ENCODE measurements at regions of chr12 and their contacts with region 1.

Region 1: GRCh38 chr12:57852620-57853500 is 6.3 kb upstream of the CTDSP2 start:
- DNase-seq: no peak
- H3K4me3 ChIP-seq: no peak overlapping the region
- H3K27ac ChIP-seq: no peak overlapping the region
- H3K4me1 ChIP-seq: no peaks in the 10 kb centered on the region
- H3K27me3 ChIP-seq: no peaks in the 10 kb centered on the region
- CTCF ChIP-seq: no peak

Region 2: GRCh38 chr12:57765042-57765697 is 87.7 kb before region 1 on chr12:
- CTCF ChIA-PET with region 1: no interaction called
- dilution Hi-C with region 1: no loop called
- in situ Hi-C with region 1: no loop called
- intact Hi-C with region 1: no loop called
- DNase-seq: peak; percentile 73
- H3K4me3 ChIP-seq: peak overlapping the region; percentile 45 to 68 (median 58)
- H3K27ac ChIP-seq: peak overlapping the region; percentile 44
- H3K4me1 ChIP-seq: peaks cover 37% of the 10 kb centered on the region
- H3K27me3 ChIP-seq: no peaks in the 10 kb centered on the region
- CTCF ChIP-seq: peak; percentile 18 to 49

Region 3: GRCh38 chr12:57815177-57816000 is 37.5 kb before region 1 on chr12:
- CTCF ChIA-PET with region 1: no interaction called
- dilution Hi-C with region 1: loop called (anchors 5 kb)
- in situ Hi-C with region 1: no loop called
- intact Hi-C with region 1: no loop called
- DNase-seq: no peak
- H3K4me3 ChIP-seq: no peak overlapping the region
- H3K27ac ChIP-seq: no peak overlapping the region
- H3K4me1 ChIP-seq: peaks cover 5% of the 10 kb centered on the region
- H3K27me3 ChIP-seq: no peaks in the 10 kb centered on the region
- CTCF ChIP-seq: peak in 1 of 2 donors; percentile 17

Region 4: DNA sequence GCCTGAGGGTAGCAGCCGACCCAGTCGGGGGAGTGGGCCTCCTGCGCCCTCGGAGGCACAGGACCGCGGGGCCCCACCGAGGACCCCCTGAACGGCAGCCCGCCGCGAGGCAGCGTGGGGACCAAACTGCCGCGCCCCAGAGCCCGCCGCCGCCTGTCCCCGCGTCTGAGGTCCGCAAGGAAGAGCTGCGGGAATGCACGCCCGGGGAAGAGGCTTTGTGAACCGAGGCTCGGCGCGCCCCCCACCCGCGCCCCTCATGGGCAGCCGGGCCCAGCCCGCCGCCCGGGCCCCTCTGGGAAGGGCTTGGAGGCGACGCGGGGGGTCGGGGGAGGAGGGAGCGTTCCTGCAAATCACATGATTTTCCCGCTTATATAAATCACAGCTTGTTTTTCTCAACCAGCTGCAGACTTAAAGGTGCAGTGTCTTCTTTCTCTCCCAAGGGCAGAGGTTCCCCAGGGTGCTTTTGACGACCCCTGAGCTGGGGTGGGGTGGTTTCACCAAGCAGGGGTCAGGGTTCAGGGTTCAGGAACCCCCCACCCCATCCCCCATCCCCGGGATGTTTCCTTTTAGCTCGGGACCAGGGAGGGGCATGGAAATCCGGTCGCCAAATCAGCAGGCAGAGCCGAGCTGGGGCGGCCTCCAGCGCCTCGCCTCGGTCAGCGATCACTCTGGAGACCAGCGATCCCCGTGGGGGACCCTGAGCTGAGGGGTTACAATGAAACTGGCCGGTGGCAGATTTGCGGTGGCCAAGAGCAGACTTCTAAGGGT is 43.8 kb after region 1 on chr12:
- CTCF ChIA-PET with region 1: no interaction called
- dilution Hi-C with region 1: loop called (anchors 5 kb)
- in situ Hi-C with region 1: no loop called
- intact Hi-C with region 1: no loop called
- DNase-seq: no peak
- H3K4me3 ChIP-seq: peak overlapping the region; percentile 45 to 50 (median 47)
- H3K27ac ChIP-seq: peak overlapping the region; percentile 19
- H3K4me1 ChIP-seq: peaks cover 48% of the 10 kb centered on the region
- H3K27me3 ChIP-seq: no peaks in the 10 kb centered on the region
- CTCF ChIP-seq: peak in 1 of 2 donors; percentile 46

Measured in mammary epithelial cell (primary cell).